ENCODE measurements at regions of chr6 and their contacts with region 1.

Region 1: GRCh38 chr6:42563697-42564505 is at the start of gene UBR2:
- DNase-seq: peak; percentile 91
- H3K4me3 Mint-ChIP-seq: peak within 1 kb of the TSS; percentile 100
- H3K27ac Mint-ChIP-seq: peak within 1 kb of the TSS; percentile 97
- H3K4me1 Mint-ChIP-seq: peaks cover 31% of the 10 kb centered on the region
- H3K27me3 Mint-ChIP-seq: peaks cover 2% of the 10 kb centered on the region
- total RNA-seq, gene UBR2: 26.8 and 28.1 TPM in 2 replicates

Region 2: GRCh38 chr6:41787219-41787917 is 776.5 kb before region 1 on chr6 and contains the start of gene TOMM6:
- intact Hi-C with region 1: loop called (anchors 1 kb)
- DNase-seq: peak; percentile 95
- H3K4me3 Mint-ChIP-seq: peak within 1 kb of the TSS; percentile 97
- H3K27ac Mint-ChIP-seq: peak within 1 kb of the TSS; percentile 93
- H3K4me1 Mint-ChIP-seq: peaks cover 17% of the 10 kb centered on the region
- H3K27me3 Mint-ChIP-seq: peaks cover 12% of the 10 kb centered on the region
- total RNA-seq, gene TOMM6: 334 and 338 TPM in 2 replicates

Region 3: DNA sequence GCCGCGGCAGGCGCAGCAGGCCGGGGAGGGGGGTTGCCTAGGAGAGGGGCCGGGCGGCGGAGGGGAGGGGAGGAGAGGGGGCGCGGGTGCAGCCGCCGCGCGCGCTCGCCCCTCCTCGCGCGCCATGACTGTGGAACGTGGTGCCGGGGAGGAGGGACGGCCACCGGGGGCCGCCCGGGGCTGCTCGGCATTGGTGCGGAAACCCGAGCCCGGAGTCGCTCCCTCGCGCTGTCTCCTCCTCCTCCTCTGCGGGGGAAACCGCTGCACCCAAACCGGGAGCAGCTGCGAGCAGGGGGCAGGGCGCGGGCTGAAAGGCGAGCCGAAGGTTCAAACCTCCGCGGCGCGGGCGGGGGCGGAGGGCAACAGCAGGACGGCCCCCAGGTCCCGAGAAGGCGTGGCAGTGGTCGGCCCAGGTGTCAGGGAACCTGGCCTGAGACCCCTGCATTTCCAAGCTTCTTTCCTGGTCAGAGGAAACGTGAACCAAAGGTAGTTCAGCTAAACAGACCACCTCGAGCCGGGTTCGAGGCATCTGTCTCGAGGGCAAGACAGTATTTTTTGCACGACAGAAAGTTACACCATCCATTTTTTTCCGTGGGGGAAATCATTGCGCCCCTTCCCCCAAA is 110.8 kb before region 1 on chr6:
- intact Hi-C with region 1: loop called (anchors 5 kb)
- DNase-seq: peak; percentile 76
- H3K4me3 Mint-ChIP-seq: peak overlapping the region; percentile 100
- H3K27ac Mint-ChIP-seq: peak overlapping the region; percentile 68
- H3K4me1 Mint-ChIP-seq: peaks cover 39% of the 10 kb centered on the region
- H3K27me3 Mint-ChIP-seq: no peaks in the 10 kb centered on the region

Region 4: GRCh38 chr6:42745707-42746462 is 182.0 kb after region 1 on chr6 and contains the start of gene TBCC:
- intact Hi-C with region 1: loop called (anchors 1 kb)
- DNase-seq: peak; percentile 91
- H3K4me3 Mint-ChIP-seq: peak within 1 kb of the TSS; percentile 100
- H3K27ac Mint-ChIP-seq: peak within 1 kb of the TSS; percentile 100
- H3K4me1 Mint-ChIP-seq: peaks cover 32% of the 10 kb centered on the region
- H3K27me3 Mint-ChIP-seq: no peaks in the 10 kb centered on the region
- total RNA-seq, gene TBCC: 20.1 and 22.3 TPM in 2 replicates

Region 5: GRCh38 chr6:43013843-43014433 is 450.0 kb after region 1 on chr6 and contains the starts of genes KLHDC3 and MEA1:
- intact Hi-C with region 1: loop called (anchors 5 kb)
- DNase-seq: peak; percentile 99
- H3K4me3 Mint-ChIP-seq: peak within 1 kb of the TSS; percentile 93
- H3K27ac Mint-ChIP-seq: peak within 1 kb of the TSS; percentile 78
- H3K4me1 Mint-ChIP-seq: peaks cover 41% of the 10 kb centered on the region
- H3K27me3 Mint-ChIP-seq: peaks cover 2% of the 10 kb centered on the region
- total RNA-seq, gene KLHDC3: 76.6 and 77.0 TPM in 2 replicates
- total RNA-seq, gene MEA1: 89.3 and 92.7 TPM in 2 replicates

Region 6: DNA sequence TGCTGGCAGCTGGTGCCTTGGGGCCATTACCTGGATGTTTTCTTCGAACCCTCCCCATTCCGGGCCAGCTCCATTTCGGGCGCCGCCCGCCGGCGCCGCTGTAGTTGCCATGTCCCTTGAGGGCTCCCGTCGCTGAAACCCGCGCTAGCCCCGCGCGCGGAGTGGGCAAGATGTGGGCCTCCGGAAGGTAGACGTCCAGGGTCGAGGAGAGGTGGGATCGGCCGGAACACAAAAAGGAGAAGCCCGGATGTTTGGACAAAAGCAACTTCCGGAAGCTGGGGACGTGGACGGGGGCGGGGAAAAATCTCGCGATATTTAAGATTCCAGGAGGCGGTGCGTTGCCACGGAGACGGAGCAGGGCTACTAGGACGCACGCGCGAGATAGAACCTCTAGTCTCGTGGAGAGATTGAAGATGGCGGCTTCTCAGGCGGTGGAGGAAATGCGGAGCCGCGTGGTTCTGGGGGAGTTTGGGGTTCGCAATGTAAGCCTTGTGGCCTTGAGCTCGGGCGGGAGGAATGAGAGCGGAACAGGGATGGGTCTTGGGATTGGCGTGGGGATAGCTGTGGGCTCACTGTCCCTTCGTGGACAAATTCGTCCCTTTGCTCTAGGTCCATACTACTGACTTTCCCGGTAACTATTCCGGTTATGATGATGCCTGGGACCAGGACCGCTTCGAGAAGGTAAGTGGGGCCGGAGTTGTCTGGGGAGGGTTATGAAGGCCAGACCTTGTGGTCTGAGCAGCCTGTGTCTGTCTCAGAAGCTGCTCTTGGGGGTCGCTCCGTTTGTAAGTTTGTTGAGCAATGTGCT is 953.0 kb after region 1 on chr6 and contains the starts of genes POLR1C and YIPF3:
- intact Hi-C with region 1: loop called (anchors 1 kb)
- DNase-seq: peak; percentile 95
- H3K4me3 Mint-ChIP-seq: no peak within 1 kb of the TSS
- H3K27ac Mint-ChIP-seq: no peak within 1 kb of the TSS
- H3K4me1 Mint-ChIP-seq: peaks cover 20% of the 10 kb centered on the region
- H3K27me3 Mint-ChIP-seq: no peaks in the 10 kb centered on the region
- total RNA-seq, gene POLR1C: 85.8 and 98.0 TPM in 2 replicates
- total RNA-seq, gene YIPF3: 60.2 and 62.5 TPM in 2 replicates